HepG2 (cell line): ENCODE measurements at regions of chr16 and their contacts with region 1.

Region 1: GRCh38 chr16:75519881-75520280 is 16.0 kb downstream of the CHST5 start:
- DNase-seq: no peak
- ATAC-seq: no peak
- H3K4me3 ChIP-seq: no peak overlapping the region
- H3K27ac ChIP-seq: no peak overlapping the region
- H3K4me1 ChIP-seq: peaks cover 10% of the 10 kb centered on the region
- H3K27me3 ChIP-seq: no peaks in the 10 kb centered on the region
- CTCF ChIP-seq: no peak
- EP300 ChIP-seq: no peak
- POLR2A ChIP-seq: no peak
- RAD21 ChIP-seq: no peak

Region 2: GRCh38 chr16:75402821-75403475 is 116.9 kb before region 1 on chr16:
- CTCF ChIA-PET with region 1: no interaction called
- POLR2A ChIA-PET with region 1: no interaction called
- in situ Hi-C with region 1: no loop called
- intact Hi-C with region 1: no loop called
- DNase-seq: peak; percentile 36
- ATAC-seq: peak; percentile 46; the same call in 2 of the 3 replicates
- H3K4me3 ChIP-seq: no peak overlapping the region
- H3K27ac ChIP-seq: no peak overlapping the region
- H3K4me1 ChIP-seq: peaks cover 13% of the 10 kb centered on the region
- H3K27me3 ChIP-seq: no peaks in the 10 kb centered on the region
- CTCF ChIP-seq: peak; percentile 60
- EP300 ChIP-seq: no peak
- POLR2A ChIP-seq: no peak
- RAD21 ChIP-seq: no peak; the same call in 1 of the 2 replicates

Region 3: GRCh38 chr16:75432828-75433731 is 86.8 kb before region 1 on chr16 and contains the start of gene CFDP1:
- CTCF ChIA-PET with region 1: no interaction called
- POLR2A ChIA-PET with region 1: interaction called, 16 read pairs
- in situ Hi-C with region 1: no loop called
- intact Hi-C with region 1: no loop called
- DNase-seq: peak; percentile 94
- ATAC-seq: peak; percentile 93
- H3K4me3 ChIP-seq: peak within 1 kb of the TSS; percentile 76 to 95 (median 78)
- H3K27ac ChIP-seq: peak within 1 kb of the TSS; percentile 94
- H3K4me1 ChIP-seq: peaks cover 58% of the 10 kb centered on the region
- H3K27me3 ChIP-seq: no peaks in the 10 kb centered on the region; a peak in 1 of 5 replicates
- CTCF ChIP-seq: peak; percentile 49
- EP300 ChIP-seq: peak in 1 of 2 experiments; percentile 11; a peak in 1 of 4 replicates
- POLR2A ChIP-seq: peak; percentile 81 to 88
- RAD21 ChIP-seq: peak; percentile 23; the same call in 1 of the 2 replicates
- total RNA-seq, gene CFDP1: 153 and 198 TPM in 2 replicates

Region 4: GRCh38 chr16:75471723-75472633 is 47.9 kb before region 1 on chr16:
- CTCF ChIA-PET with region 1: interaction called, 19 read pairs
- POLR2A ChIA-PET with region 1: interaction called, 5 read pairs
- in situ Hi-C with region 1: loop called (anchors 5 kb)
- intact Hi-C with region 1: loop called (anchors 1 kb)
- DNase-seq: peak; percentile 61
- ATAC-seq: peak; percentile 94
- H3K4me3 ChIP-seq: no peak overlapping the region
- H3K27ac ChIP-seq: no peak overlapping the region
- H3K4me1 ChIP-seq: peaks cover 6% of the 10 kb centered on the region
- H3K27me3 ChIP-seq: no peaks in the 10 kb centered on the region; a peak in 1 of 5 replicates
- CTCF ChIP-seq: peak; percentile 94
- EP300 ChIP-seq: no peak
- POLR2A ChIP-seq: no peak
- RAD21 ChIP-seq: peak; percentile 77

Region 5: GRCh38 chr16:75532142-75532765 is 12.4 kb after region 1 on chr16:
- CTCF ChIA-PET with region 1: no interaction called
- POLR2A ChIA-PET with region 1: interaction called, 11 read pairs
- in situ Hi-C with region 1: no loop called
- intact Hi-C with region 1: no loop called
- DNase-seq: no peak
- ATAC-seq: no peak
- H3K4me3 ChIP-seq: no peak overlapping the region
- H3K27ac ChIP-seq: no peak overlapping the region
- H3K4me1 ChIP-seq: peaks cover 10% of the 10 kb centered on the region
- H3K27me3 ChIP-seq: peaks cover 0 to 1% of the 10 kb centered on the region in 2 experiments; a peak in 1 of 5 replicates
- CTCF ChIP-seq: no peak
- EP300 ChIP-seq: no peak
- POLR2A ChIP-seq: no peak
- RAD21 ChIP-seq: no peak

Region 6: GRCh38 chr16:75546293-75546692 is 26.4 kb after region 1 on chr16:
- CTCF ChIA-PET with region 1: no interaction called
- POLR2A ChIA-PET with region 1: no interaction called
- in situ Hi-C with region 1: no loop called
- intact Hi-C with region 1: no loop called
- DNase-seq: no peak
- ATAC-seq: no peak
- H3K4me3 ChIP-seq: no peak overlapping the region
- H3K27ac ChIP-seq: no peak overlapping the region
- H3K4me1 ChIP-seq: 0 out of 2 replicates have a peak, but pooled peaks cover 7% of the 10 kb centered on the region
- H3K27me3 ChIP-seq: no peaks in the 10 kb centered on the region
- CTCF ChIP-seq: no peak
- EP300 ChIP-seq: no peak
- POLR2A ChIP-seq: no peak
- RAD21 ChIP-seq: no peak

Region 7: GRCh38 chr16:75566040-75566810 is 46.3 kb after region 1 on chr16 and contains the start of gene GABARAPL2:
- CTCF ChIA-PET with region 1: no interaction called
- POLR2A ChIA-PET with region 1: interaction called, 20 read pairs
- in situ Hi-C with region 1: no loop called
- intact Hi-C with region 1: loop called (anchors 5 kb)
- DNase-seq: peak; percentile 70
- ATAC-seq: peak; percentile 86
- H3K4me3 ChIP-seq: peak within 1 kb of the TSS; percentile 87 to 96 (median 88)
- H3K27ac ChIP-seq: peak within 1 kb of the TSS; percentile 34
- H3K4me1 ChIP-seq: peaks cover 28% of the 10 kb centered on the region
- H3K27me3 ChIP-seq: peaks cover 0 to 4% of the 10 kb centered on the region in 2 experiments; a peak in 2 of 5 replicates
- CTCF ChIP-seq: no peak; the same call in 1 of the 2 replicates
- EP300 ChIP-seq: no peak; a peak in 1 of 4 replicates
- POLR2A ChIP-seq: peak; percentile 16 to 81; a peak in 2 of 4 replicates
- RAD21 ChIP-seq: peak; percentile 33; the same call in 1 of the 2 replicates
- total RNA-seq, gene GABARAPL2: 76.4 and 82.4 TPM in 2 replicates

Region 8: DNA sequence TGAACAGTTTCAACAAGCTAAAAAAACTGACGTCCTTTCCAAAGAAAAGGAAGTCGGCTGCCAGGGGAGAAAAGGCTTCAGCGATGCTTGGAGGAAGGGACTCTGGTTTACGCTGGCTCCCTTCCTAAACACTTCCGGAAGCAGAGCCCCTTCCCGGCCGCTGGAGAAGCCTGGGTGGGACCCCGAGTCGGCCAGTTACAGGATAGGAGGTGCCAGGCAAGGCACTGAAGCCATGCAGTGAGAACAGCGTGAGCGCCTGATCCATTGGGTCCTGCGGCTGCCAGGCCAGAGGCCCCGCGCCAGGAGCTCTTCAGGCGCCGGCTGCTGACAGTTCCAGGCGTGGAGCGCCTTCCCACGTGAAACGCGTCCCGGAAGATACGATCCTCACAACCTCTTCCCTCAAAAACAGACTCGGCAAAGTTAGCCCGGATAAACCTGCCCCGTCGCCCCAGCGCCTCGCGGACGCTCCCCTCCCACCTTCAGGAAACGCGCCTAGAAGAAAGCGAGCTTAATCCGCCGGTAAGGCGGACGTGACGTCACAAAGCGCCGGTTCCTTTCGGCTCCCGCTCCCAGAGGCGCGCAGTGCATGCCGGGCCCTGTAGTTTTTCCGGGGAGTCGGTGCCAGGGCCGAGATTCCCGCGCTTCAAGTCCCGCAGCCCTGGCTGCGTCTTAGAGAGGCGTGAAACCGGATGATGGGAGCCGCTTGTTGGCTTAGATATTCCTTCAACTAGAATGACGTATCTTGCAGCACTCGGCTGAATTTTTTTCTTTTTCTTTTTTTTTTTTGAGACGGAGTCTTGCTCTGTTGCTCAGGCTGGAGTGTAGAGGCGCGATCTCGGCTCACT is 103.1 kb after region 1 on chr16 and contains the start of gene ADAT1:
- CTCF ChIA-PET with region 1: no interaction called
- POLR2A ChIA-PET with region 1: interaction called, 16 read pairs
- in situ Hi-C with region 1: no loop called
- intact Hi-C with region 1: loop called (anchors 2 kb)
- DNase-seq: peak; percentile 97
- ATAC-seq: peak; percentile 95
- H3K4me3 ChIP-seq: peak within 1 kb of the TSS; percentile 80 to 86 (median 86)
- H3K27ac ChIP-seq: peak within 1 kb of the TSS; percentile 69
- H3K4me1 ChIP-seq: peaks cover 34% of the 10 kb centered on the region
- H3K27me3 ChIP-seq: no peaks in the 10 kb centered on the region; a peak in 1 of 5 replicates
- CTCF ChIP-seq: peak; percentile 15; the same call in 1 of the 2 replicates
- EP300 ChIP-seq: no peak
- POLR2A ChIP-seq: peak; percentile 88 to 89
- RAD21 ChIP-seq: peak; percentile 53
- total RNA-seq, gene ADAT1: 40.8 and 50.7 TPM in 2 replicates